CD8-positive, alpha-beta T cell (primary cell): ENCODE measurements at regions of chr12 and their contacts with region 1.

Region 1: GRCh38 chr12:123075646-123076171 is 75.2 kb downstream of the PITPNM2 start:
- DNase-seq: peak; percentile 32 to 87 (median 77)
- ATAC-seq: peak; percentile 81
- H3K4me3 ChIP-seq: peak overlapping the region; percentile 56 to 66
- H3K4me3 Mint-ChIP-seq: peak overlapping the region; percentile 90
- H3K27ac ChIP-seq: peak overlapping the region; percentile 71 to 81
- H3K27ac Mint-ChIP-seq: peak overlapping the region; percentile 95
- H3K4me1 ChIP-seq: peaks cover 49% of the 10 kb centered on the region
- H3K4me1 Mint-ChIP-seq: peaks cover 63% of the 10 kb centered on the region
- H3K27me3 ChIP-seq: no peaks in the 10 kb centered on the region
- H3K27me3 Mint-ChIP-seq: no peaks in the 10 kb centered on the region
- CTCF ChIP-seq: peak; percentile 49

Region 2: DNA sequence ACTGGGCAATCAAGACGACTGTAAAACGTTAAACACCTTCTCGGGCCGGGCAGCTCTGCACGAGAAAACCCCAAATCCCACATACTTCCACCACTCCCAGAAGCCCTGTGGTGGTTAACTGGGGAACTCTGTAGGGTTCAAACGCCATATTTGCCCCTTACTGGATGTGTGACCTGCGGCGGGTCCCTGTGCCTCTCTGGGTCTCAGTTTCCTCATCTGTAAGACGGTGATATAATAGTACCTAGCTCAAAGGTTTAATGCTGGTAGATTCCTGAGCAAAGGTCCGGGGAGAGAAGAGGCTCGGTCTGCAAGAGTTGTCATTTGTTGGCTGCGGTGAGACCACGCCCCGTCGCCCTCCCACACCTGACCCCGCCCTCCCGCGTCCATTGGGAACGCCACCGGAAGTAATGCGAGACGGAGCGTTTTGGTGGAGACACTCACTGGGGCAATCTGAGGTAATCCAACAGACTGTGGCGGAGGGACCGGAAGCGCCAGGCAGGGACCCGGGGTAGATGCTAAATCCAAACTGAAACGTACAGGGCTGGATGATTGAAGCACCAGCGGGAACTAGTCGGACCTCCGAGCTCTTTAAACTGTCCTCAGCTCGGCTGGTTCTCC is 101.3 kb before region 1 on chr12:
- CTCF ChIA-PET with region 1: interaction called, 3 read pairs
- POLR2A ChIA-PET with region 1: interaction called, 5 read pairs
- intact Hi-C with region 1: loop called in 1 of 2 experiments (anchors 2 kb)
- DNase-seq: peak; percentile 97 to 100 (median 99)
- ATAC-seq: peak; percentile 85
- H3K4me3 ChIP-seq: peak overlapping the region; percentile 91 to 93
- H3K4me3 Mint-ChIP-seq: peak overlapping the region; percentile 98
- H3K27ac ChIP-seq: peak overlapping the region; percentile 93 to 97
- H3K27ac Mint-ChIP-seq: peak overlapping the region; percentile 98
- H3K4me1 ChIP-seq: peaks cover 26% of the 10 kb centered on the region
- H3K4me1 Mint-ChIP-seq: peaks cover 31% of the 10 kb centered on the region
- H3K27me3 ChIP-seq: no peaks in the 10 kb centered on the region
- H3K27me3 Mint-ChIP-seq: no peaks in the 10 kb centered on the region
- CTCF ChIP-seq: no peak

Region 3: DNA sequence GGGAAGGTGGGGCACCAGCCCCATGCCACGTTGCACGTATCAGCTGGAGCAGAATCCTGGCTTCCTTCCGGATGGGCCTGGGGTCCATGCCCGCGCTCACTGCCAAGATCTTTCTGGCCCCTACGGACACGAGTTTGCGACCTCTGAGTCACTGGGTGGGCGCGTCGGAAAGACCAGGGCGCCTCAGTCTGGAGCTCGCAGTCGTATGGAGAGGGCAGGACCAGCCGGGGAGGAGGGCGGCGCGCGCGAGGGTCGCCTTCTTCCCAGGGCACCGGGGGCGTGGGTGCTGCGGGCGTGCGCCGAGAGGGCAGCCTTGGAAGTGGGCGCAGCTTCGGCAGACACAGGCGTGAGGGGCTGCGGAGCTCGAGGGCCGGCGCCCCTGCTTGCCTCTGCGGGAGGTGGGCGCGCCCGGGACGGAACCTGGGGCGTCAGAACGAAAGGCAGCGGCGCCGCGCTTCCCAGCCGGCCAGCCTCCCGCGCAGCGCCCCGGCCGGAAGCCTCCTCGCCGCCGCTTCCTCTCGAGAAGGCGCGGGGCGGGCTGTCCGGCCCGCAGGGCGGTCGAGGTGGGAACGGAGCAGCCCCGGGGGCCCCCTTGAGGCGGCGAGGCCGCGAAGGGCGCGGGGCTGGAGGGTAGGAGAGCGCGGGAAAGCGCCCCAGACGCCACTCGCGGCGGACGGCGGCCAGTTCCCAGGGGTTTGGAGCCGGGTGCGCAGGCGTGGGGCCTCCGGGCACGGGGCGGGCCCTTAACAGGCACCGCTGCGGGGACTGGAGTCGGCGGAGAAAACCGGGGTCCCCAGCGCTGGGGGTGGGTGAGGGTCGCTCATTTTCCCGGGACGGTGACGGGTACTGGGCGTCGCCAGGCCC is 95.3 kb before region 1 on chr12 and contains the start of gene ARL6IP4:
- CTCF ChIA-PET with region 1: interaction called, 3 read pairs
- POLR2A ChIA-PET with region 1: interaction called, 5 read pairs
- intact Hi-C with region 1: loop called in 1 of 2 experiments (anchors 2 kb)
- DNase-seq: peak; percentile 27 to 84 (median 64)
- ATAC-seq: peak; percentile 75
- H3K4me3 ChIP-seq: peak within 1 kb of the TSS; percentile 67 to 82
- H3K4me3 Mint-ChIP-seq: peak within 1 kb of the TSS; percentile 88
- H3K27ac ChIP-seq: peak within 1 kb of the TSS; percentile 67 to 69
- H3K27ac Mint-ChIP-seq: peak within 1 kb of the TSS; percentile 87
- H3K4me1 ChIP-seq: peaks cover 60% of the 10 kb centered on the region
- H3K4me1 Mint-ChIP-seq: peaks cover 61% of the 10 kb centered on the region
- H3K27me3 ChIP-seq: no peaks in the 10 kb centered on the region
- H3K27me3 Mint-ChIP-seq: no peaks in the 10 kb centered on the region
- CTCF ChIP-seq: no peak
- total RNA-seq, gene ARL6IP4: 130 to 131 TPM

Region 4: DNA sequence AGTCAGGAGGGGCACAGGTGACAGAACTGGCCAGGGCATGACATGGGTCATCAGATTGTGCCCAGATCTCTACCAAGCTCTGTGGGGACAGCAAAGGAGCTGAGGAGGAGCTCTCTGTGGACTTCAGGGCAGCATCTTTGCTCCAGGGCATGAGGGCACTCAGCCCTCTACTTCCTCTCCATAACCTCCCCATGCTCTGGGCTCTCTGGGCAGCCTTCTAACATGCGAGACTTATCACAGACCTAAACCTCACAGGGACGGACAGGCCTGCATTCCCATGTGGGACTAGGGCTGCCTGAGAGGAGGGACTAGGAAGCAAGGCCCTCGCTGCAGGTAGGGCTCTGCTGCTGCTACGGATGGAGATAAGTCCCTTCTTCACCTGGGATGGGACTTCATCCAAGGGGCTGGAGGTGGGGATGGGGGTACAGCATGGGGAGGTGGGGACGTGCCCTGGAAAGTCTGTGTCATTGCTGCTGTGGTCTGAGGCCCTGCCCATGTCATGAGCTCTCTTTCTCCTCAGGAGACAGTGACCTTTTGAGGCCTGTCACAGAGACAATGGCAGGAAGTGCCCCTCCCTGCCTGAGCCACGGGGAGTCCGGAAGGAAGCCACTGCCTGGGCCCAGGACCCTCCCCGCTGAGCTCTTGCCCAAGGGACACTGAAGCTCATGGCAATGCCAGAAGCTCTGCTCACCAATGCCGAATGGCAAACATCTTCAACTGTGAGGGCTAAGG is 31.1 kb after region 1 on chr12:
- CTCF ChIA-PET with region 1: interaction called, 10 read pairs
- POLR2A ChIA-PET with region 1: interaction called, 11 read pairs
- intact Hi-C with region 1: loop called in 1 of 2 experiments (anchors 2 kb)
- DNase-seq: peak in 8 of 9 experiments; percentile 48 to 81 (median 60)
- ATAC-seq: peak; percentile 86
- H3K4me3 ChIP-seq: peak overlapping the region; percentile 0 to 26
- H3K4me3 Mint-ChIP-seq: peak overlapping the region; percentile 66
- H3K27ac ChIP-seq: peak overlapping the region; percentile 52 to 82
- H3K27ac Mint-ChIP-seq: peak overlapping the region; percentile 98
- H3K4me1 ChIP-seq: peaks cover 53% of the 10 kb centered on the region
- H3K4me1 Mint-ChIP-seq: peaks cover 72% of the 10 kb centered on the region
- H3K27me3 ChIP-seq: no peaks in the 10 kb centered on the region
- H3K27me3 Mint-ChIP-seq: no peaks in the 10 kb centered on the region
- CTCF ChIP-seq: no peak

Region 5: GRCh38 chr12:123120452-123121166 is 44.9 kb after region 1 on chr12:
- CTCF ChIA-PET with region 1: interaction called, 3 read pairs
- POLR2A ChIA-PET with region 1: interaction called, 4 read pairs
- intact Hi-C with region 1: loop called in 1 of 2 experiments (anchors 1 kb)
- DNase-seq: peak in 6 of 9 experiments; percentile 23 to 72 (median 36)
- ATAC-seq: peak; percentile 48
- H3K4me3 ChIP-seq: peak overlapping the region in 1 of 2 experiments; percentile 20
- H3K4me3 Mint-ChIP-seq: peak overlapping the region; percentile 60
- H3K27ac ChIP-seq: peak overlapping the region; percentile 58 to 72
- H3K27ac Mint-ChIP-seq: peak overlapping the region; percentile 98
- H3K4me1 ChIP-seq: peaks cover 51% of the 10 kb centered on the region
- H3K4me1 Mint-ChIP-seq: peaks cover 66% of the 10 kb centered on the region
- H3K27me3 ChIP-seq: no peaks in the 10 kb centered on the region
- H3K27me3 Mint-ChIP-seq: no peaks in the 10 kb centered on the region
- CTCF ChIP-seq: no peak